ENCODE measurements at regions of chr1 and their contacts with region 1.

Region 1: DNA sequence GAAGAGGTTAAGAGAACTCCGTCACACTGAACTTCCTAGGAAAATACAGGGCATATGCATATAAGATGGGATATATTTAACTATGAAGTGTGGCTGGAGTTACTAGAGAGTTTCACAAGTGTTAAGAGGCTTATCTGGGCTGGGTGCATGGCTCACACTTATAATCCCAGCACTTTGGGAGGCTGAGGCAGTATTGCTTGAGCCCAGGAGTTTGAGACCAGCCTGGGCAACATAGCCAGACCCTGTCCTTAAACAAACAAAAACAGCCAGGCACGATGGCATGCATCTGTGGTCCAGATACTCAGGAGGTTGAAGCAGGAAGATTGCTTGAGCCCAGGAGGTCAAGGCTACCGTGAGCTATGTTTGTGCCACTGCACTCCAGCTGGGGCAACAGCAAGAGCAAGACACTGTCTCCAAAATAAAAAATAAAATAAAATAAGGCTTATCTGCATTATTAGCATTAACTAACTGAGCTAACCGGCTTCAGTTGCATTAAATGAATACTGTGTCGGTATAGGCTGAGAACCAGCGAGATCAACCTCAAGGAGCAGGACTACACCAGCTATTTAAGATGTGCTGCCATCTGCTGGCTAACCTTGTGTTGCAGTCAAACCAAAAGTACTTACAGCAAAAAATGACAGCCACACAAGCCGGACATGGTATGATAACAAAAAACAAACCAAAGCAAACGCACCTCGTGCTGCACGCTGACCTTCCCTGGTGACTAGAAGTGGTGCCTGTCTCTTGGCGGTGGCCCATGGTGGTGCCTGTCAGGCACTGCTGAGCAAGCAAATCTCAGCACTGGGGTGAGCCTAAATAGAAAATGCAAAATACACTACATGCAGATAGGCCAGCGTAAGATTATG is 19.7 kb upstream of the RBBP5 start:
- DNase-seq: peak; percentile 69
- H3K4me3 ChIP-seq: no peak overlapping the region; the same call in 1 of the 2 replicates
- H3K27ac ChIP-seq: no peak overlapping the region
- H3K27me3 ChIP-seq: no peaks in the 10 kb centered on the region
- CTCF ChIP-seq: peak; percentile 84

Region 2: DNA sequence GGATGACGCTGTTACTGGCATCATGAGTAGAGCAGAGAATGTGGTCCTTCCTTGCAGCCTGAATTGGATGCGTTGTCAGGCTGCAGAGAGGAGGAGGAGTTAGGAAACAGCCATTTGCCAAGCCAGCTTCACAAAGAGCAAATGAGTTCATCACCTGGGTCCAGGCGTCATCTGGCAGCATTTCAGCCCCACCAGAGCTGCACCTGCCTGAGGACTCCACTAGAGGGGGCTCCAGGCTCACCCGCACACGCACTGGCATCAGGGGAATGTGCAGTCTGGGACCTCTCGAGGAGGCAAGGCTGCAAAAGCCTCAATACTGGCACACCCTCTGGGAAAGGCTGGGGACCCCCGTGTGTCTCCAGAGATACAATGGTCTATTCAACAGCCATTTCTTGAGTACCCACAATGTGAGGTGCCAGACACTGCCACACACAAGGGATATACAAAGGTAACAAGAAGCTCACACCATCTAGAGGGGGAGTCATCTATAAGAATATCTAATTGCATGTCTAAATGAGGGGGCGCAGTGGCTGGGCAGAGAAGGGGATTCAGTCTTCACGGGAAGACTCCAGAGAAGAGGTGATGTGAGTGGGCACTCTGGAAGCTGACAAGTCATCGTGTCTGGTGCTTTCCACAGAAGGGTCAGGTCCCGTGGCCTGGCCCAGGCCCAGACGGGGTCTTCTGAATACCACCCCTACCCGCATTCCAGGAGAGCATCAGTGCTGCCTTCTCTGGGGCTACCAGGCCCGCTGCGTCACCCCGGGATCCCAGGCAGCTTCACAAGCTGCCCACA is 152.0 kb before region 1 on chr1:
- CTCF ChIA-PET with region 1: interaction called, 16 read pairs
- POLR2A ChIA-PET with region 1: no interaction called
- DNase-seq: peak; percentile 36
- H3K4me3 ChIP-seq: no peak overlapping the region
- H3K27ac ChIP-seq: no peak overlapping the region
- H3K27me3 ChIP-seq: peaks cover 36% of the 10 kb centered on the region
- CTCF ChIP-seq: peak; percentile 98

Region 3: GRCh38 chr1:205127646-205128045 is 13.8 kb before region 1 on chr1:
- CTCF ChIA-PET with region 1: interaction called, 36 read pairs
- POLR2A ChIA-PET with region 1: no interaction called
- DNase-seq: no peak
- H3K4me3 ChIP-seq: no peak overlapping the region
- H3K27ac ChIP-seq: no peak overlapping the region
- H3K27me3 ChIP-seq: no peaks in the 10 kb centered on the region
- CTCF ChIP-seq: no peak

Region 4: GRCh38 chr1:205172729-205173366 is 31.4 kb after region 1 on chr1:
- CTCF ChIA-PET with region 1: interaction called, 13 read pairs
- POLR2A ChIA-PET with region 1: no interaction called
- DNase-seq: peak; percentile 89
- H3K4me3 ChIP-seq: no peak overlapping the region
- H3K27ac ChIP-seq: peak overlapping the region; percentile 79
- H3K27me3 ChIP-seq: no peaks in the 10 kb centered on the region
- CTCF ChIP-seq: no peak

Region 5: GRCh38 chr1:205199090-205199930 is 57.8 kb after region 1 on chr1:
- CTCF ChIA-PET with region 1: interaction called, 11 read pairs
- POLR2A ChIA-PET with region 1: no interaction called
- DNase-seq: no peak
- H3K4me3 ChIP-seq: no peak overlapping the region
- H3K27ac ChIP-seq: no peak overlapping the region
- H3K27me3 ChIP-seq: no peaks in the 10 kb centered on the region
- CTCF ChIP-seq: no peak

Region 6: DNA sequence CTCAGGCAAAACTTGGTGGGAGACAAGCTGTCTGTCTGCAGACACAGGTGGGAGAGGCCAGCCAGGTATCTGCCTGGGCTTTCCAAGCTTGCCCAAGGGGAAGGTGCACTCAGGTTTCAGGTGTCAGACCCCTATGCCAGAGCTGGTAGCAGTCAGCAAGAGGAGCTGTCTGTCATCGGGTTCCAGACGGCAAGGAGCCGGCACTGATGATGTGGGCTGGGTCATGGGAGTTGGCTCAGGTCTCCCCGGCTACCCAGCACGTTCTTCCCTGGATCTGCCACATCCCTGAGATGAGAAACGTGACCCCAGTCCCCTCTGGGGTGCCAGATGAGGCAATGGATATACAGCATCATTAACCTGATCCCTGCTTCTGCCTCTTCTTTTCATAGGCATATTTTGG is 109.2 kb after region 1 on chr1:
- CTCF ChIA-PET with region 1: interaction called, 62 read pairs
- POLR2A ChIA-PET with region 1: interaction called, 3 read pairs
- DNase-seq: no peak
- H3K4me3 ChIP-seq: no peak overlapping the region
- H3K27ac ChIP-seq: no peak overlapping the region
- H3K27me3 ChIP-seq: no peaks in the 10 kb centered on the region
- CTCF ChIP-seq: no peak

Region 7: DNA sequence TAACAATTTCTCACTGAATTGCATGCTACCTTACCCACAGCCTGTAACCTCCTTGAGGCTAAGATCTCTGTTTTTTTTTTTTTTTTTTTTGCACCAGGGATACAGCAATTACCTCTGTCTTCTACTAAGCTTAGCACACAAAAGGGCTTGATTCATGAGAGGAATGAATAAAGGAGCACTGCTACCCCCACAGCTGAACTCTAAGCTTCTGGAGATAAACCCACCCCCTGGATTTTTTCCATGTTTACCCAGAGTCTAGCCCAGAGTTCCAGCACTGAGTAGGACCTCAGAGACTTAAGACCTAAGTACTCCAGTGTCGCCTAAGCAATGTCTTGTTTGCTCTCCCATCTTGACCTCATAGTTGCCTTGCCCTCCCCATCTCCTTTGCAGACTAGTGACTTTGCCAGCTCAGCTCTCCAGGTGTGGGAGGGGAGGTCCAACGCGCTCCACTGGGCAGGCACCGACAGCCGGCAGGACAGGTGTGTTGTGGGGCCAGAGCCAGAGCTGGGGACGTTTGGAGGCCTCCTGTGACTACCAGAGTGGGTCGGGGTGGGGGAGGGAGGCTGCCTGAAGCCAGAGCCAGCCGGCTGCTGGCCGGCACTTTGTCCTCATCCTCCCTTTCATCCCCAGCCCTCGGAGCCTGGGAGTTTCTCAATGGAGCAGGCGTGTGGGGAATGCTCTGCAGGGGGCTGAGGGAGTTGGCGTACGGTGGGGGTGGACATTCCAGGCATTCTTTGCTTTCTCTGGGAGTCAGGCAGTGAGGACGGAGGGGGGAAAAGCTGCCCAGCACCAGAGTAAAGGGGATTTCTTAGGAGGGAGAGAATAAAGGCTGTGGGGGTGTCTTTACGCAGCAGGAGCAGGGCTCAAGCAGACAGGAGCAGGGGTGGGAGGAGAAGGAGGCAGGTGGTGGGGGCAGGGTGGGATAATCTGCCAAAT is 159.7 kb after region 1 on chr1:
- CTCF ChIA-PET with region 1: interaction called, 11 read pairs
- POLR2A ChIA-PET with region 1: no interaction called
- DNase-seq: peak; percentile 92
- H3K4me3 ChIP-seq: peak overlapping the region; percentile 25; the same call in 1 of the 2 replicates
- H3K27ac ChIP-seq: peak overlapping the region; percentile 100
- H3K27me3 ChIP-seq: no peaks in the 10 kb centered on the region
- CTCF ChIP-seq: no peak

Region 8: GRCh38 chr1:205416322-205416721 is 274.9 kb after region 1 on chr1:
- CTCF ChIA-PET with region 1: no interaction called
- POLR2A ChIA-PET with region 1: no interaction called
- DNase-seq: no peak
- H3K4me3 ChIP-seq: no peak overlapping the region
- H3K27ac ChIP-seq: no peak overlapping the region
- H3K27me3 ChIP-seq: peaks cover 64% of the 10 kb centered on the region
- CTCF ChIP-seq: no peak

Measured in AG04450 (cell line).